ENCODE measurements at regions of chr20 and their contacts with region 1.

Region 1: GRCh38 chr20:354298-355064 is 7.6 kb downstream of the NRSN2 start:
- DNase-seq: peak; percentile 86
- ATAC-seq: peak; percentile 99
- H3K4me3 Mint-ChIP-seq: no peak overlapping the region
- H3K27ac Mint-ChIP-seq: no peak overlapping the region
- H3K4me1 Mint-ChIP-seq: peaks cover 3% of the 10 kb centered on the region
- H3K27me3 Mint-ChIP-seq: no peaks in the 10 kb centered on the region

Region 2: GRCh38 chr20:433300-433975 is 79.0 kb after region 1 on chr20:
- CTCF ChIA-PET with region 1: interaction called, 4 read pairs
- POLR2A ChIA-PET with region 1: no interaction called
- intact Hi-C with region 1: loop called in 1 of 2 experiments (anchors 1 kb)
- DNase-seq: peak; percentile 86
- ATAC-seq: peak; percentile 86
- H3K4me3 Mint-ChIP-seq: peak overlapping the region; percentile 51
- H3K27ac Mint-ChIP-seq: peak overlapping the region; percentile 94
- H3K4me1 Mint-ChIP-seq: peaks cover 67% of the 10 kb centered on the region
- H3K27me3 Mint-ChIP-seq: no peaks in the 10 kb centered on the region

Region 3: DNA sequence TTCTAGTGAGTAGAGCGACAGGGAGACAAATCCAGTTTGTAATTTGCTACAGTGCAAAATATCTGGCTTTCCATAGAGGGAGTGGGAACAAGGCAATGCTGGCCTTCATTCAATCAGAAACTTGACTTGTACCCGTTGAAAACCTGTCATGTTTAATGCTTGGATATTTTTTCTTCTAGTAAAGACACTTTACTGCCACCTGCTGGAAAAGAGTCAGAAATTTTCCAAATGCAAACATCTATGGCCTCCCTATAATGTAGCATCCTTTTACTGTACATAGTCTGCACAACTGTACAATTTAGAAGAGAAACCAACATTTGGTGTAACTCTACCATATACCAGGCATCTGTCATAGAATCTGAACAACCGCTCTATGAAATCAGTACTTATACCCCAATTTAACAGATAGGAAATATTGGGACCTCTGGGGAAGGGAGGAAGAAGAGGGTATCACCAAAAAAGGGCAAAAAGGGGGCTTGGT is 124.5 kb after region 1 on chr20:
- CTCF ChIA-PET with region 1: interaction called, 24 read pairs
- POLR2A ChIA-PET with region 1: no interaction called
- intact Hi-C with region 1: loop called (anchors 1 kb)
- DNase-seq: peak; percentile 19
- ATAC-seq: peak; percentile 82
- H3K4me3 Mint-ChIP-seq: no peak overlapping the region
- H3K27ac Mint-ChIP-seq: peak overlapping the region; percentile 30
- H3K4me1 Mint-ChIP-seq: peaks cover 28% of the 10 kb centered on the region
- H3K27me3 Mint-ChIP-seq: no peaks in the 10 kb centered on the region

Region 4: DNA sequence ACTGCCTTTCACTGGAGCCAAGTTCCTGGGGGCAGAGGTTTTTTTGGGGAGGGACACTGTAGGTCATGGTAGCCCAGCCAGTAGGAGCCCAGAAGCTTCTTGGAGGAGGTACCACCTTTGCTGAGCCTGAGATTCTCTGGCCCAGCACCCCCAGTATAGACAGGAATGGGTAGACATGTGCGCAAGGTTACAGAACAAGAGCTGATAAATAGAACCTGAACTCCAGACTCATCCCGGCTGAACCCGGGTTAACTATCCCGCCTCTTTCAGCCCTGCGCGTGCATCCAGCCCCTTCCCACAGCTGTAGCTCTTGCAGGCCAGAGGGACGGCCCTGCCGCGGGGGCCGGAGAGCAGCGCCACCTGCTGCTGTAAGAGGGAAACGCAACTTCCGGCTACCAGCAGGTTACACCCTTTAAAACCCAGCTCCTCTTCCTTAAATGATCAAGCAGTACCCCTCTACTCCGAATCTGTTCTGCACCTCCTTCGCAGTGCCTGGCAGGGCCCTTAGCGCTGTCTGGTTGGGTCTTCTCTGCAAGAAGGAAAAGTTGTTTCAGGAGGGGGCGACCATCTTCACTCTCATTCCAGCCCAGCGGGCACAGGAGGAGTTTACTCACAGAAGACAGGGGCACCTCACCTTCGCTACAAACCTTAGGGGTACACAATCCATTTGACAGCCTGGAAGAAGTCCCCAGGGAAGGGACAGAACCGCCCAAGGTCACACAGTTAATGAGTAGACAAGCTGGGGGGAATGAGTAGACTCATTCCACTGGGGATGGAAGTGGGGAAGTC is 291.0 kb after region 1 on chr20:
- CTCF ChIA-PET with region 1: interaction called, 9 read pairs
- POLR2A ChIA-PET with region 1: no interaction called
- intact Hi-C with region 1: loop called (anchors 1 to 5 kb)
- DNase-seq: peak; percentile 83
- ATAC-seq: peak; percentile 87
- H3K4me3 Mint-ChIP-seq: no peak overlapping the region
- H3K27ac Mint-ChIP-seq: no peak overlapping the region
- H3K4me1 Mint-ChIP-seq: peaks cover 14% of the 10 kb centered on the region
- H3K27me3 Mint-ChIP-seq: peaks cover 9% of the 10 kb centered on the region

Region 5: GRCh38 chr20:667391-667964 is 313.0 kb after region 1 on chr20:
- CTCF ChIA-PET with region 1: interaction called, 3 read pairs
- POLR2A ChIA-PET with region 1: no interaction called
- intact Hi-C with region 1: loop called (anchors 5 kb)
- DNase-seq: peak; percentile 83
- ATAC-seq: peak; percentile 66
- H3K4me3 Mint-ChIP-seq: no peak overlapping the region
- H3K27ac Mint-ChIP-seq: no peak overlapping the region
- H3K4me1 Mint-ChIP-seq: peaks cover 4% of the 10 kb centered on the region
- H3K27me3 Mint-ChIP-seq: peaks cover 47% of the 10 kb centered on the region

Region 6: DNA sequence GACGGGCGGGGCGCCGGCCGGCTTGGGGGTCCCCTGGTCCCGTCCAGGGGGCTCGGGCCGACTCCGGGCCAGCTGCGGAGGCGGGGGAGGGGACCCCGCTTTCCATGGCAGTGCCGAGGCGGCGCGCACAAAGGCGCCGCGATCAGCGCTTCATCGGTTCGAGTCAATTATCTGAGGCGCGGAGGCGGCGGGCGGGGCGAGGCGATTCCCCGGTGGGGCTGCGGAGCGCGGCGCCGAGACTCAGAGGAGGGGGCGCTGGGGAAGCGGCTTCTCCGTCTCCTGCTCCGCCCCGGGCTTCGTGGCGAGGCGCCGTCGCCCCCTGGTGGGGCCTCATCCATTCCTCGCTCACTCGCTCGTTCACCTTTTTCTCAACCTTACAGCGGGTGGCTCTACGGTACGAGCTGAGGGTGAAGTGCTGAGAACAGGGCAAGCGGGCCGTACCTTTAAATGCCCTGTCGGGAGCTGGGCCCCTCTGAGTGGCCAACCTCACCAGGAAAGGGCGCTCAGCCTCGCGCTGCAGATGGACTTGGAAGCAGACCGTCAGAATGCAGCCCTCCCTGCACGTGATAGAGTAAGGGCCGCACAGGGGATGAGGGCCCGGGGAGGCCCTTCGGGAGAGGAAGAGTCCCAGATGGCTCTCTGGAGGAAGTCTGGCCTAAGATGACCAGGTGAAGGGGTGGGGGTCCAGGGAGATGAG is 373.9 kb after region 1 on chr20:
- CTCF ChIA-PET with region 1: no interaction called
- POLR2A ChIA-PET with region 1: no interaction called
- intact Hi-C with region 1: loop called in 1 of 2 experiments (anchors 1 kb)
- DNase-seq: peak; percentile 80
- ATAC-seq: peak; percentile 91
- H3K4me3 Mint-ChIP-seq: no peak overlapping the region
- H3K27ac Mint-ChIP-seq: no peak overlapping the region
- H3K4me1 Mint-ChIP-seq: no peaks in the 10 kb centered on the region
- H3K27me3 Mint-ChIP-seq: peaks cover 34% of the 10 kb centered on the region